Transverse colon (tissue), 4 donors: ENCODE measurements at regions of chr18 and their contacts with region 1.

Region 1: GRCh38 chr18:75023473-75023872 is 185.5 kb downstream of the PTGR3 start:
- DNase-seq: no peak
- H3K4me3 ChIP-seq: no peak overlapping the region
- H3K27ac ChIP-seq: no peak overlapping the region
- H3K4me1 ChIP-seq: no peaks in the 10 kb centered on the region
- H3K27me3 ChIP-seq: no peaks in the 10 kb centered on the region
- CTCF ChIP-seq: no peak
- EP300 ChIP-seq: no peak
- POLR2A ChIP-seq: no peak

Region 2: GRCh38 chr18:75984853-75985252 is 961.4 kb after region 1 on chr18:
- in situ Hi-C with region 1: no loop called
- intact Hi-C with region 1: no loop called
- DNase-seq: no peak
- H3K4me3 ChIP-seq: no peak overlapping the region
- H3K27ac ChIP-seq: no peak overlapping the region
- H3K4me1 ChIP-seq: no peaks in the 10 kb centered on the region
- H3K27me3 ChIP-seq: no peaks in the 10 kb centered on the region
- CTCF ChIP-seq: no peak
- EP300 ChIP-seq: no peak
- POLR2A ChIP-seq: no peak

Region 3: GRCh38 chr18:76252880-76253279 is 1229.4 kb after region 1 on chr18:
- in situ Hi-C with region 1: no loop called
- intact Hi-C with region 1: loop called (anchors 10 kb)
- DNase-seq: no peak
- H3K4me3 ChIP-seq: no peak overlapping the region
- H3K27ac ChIP-seq: no peak overlapping the region
- H3K4me1 ChIP-seq: peaks cover 0 to 4% (median 0%) of the 10 kb centered on the region in 4 donors
- H3K27me3 ChIP-seq: no peaks in the 10 kb centered on the region
- CTCF ChIP-seq: no peak
- EP300 ChIP-seq: no peak
- POLR2A ChIP-seq: no peak